ENCODE measurements at regions of chr17 and their contacts with region 1.

Region 1: GRCh38 chr17:6327007-6327406 is 107.9 kb downstream of the AIPL1 start:
- DNase-seq: no peak
- H3K4me3 ChIP-seq: no peak overlapping the region
- H3K27ac ChIP-seq: no peak overlapping the region
- H3K4me1 ChIP-seq: no peaks in the 10 kb centered on the region
- H3K27me3 ChIP-seq: no peaks in the 10 kb centered on the region
- CTCF ChIP-seq: no peak
- EP300 ChIP-seq: no peak
- POLR2A ChIP-seq: no peak

Region 2: GRCh38 chr17:6126768-6127167 is 200.2 kb before region 1 on chr17:
- in situ Hi-C with region 1: no loop called
- intact Hi-C with region 1: no loop called
- DNase-seq: no peak
- H3K4me3 ChIP-seq: no peak overlapping the region
- H3K27ac ChIP-seq: no peak overlapping the region
- H3K4me1 ChIP-seq: no peaks in the 10 kb centered on the region
- H3K27me3 ChIP-seq: no peaks in the 10 kb centered on the region
- CTCF ChIP-seq: no peak
- EP300 ChIP-seq: no peak
- POLR2A ChIP-seq: no peak

Region 3: DNA sequence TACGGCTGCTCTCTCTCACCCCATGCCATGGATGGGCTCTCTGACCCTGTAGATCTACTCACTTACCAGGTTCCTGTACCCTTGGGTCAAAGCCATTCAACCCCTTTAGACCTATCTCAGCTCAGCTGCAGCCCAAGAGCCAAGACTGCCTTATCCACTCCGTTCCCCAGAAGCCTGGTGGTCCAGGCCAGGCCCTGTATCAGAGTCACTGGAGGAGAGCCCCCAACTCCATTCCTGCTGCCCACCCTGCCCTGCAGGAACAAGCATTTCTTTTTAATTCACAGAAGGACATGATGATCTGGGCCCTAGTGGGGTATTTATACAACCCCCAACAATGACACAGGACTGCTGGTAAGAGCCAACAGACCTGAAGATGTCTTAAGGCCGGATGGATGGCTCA is 31.1 kb after region 1 on chr17:
- in situ Hi-C with region 1: no loop called
- intact Hi-C with region 1: loop called (anchors 1 kb)
- DNase-seq: no peak
- H3K4me3 ChIP-seq: no peak overlapping the region
- H3K27ac ChIP-seq: no peak overlapping the region
- H3K4me1 ChIP-seq: no peaks in the 10 kb centered on the region
- H3K27me3 ChIP-seq: peaks cover 6% of the 10 kb centered on the region
- CTCF ChIP-seq: no peak
- EP300 ChIP-seq: no peak
- POLR2A ChIP-seq: no peak

Region 4: GRCh38 chr17:6381057-6381456 is 54.0 kb after region 1 on chr17:
- in situ Hi-C with region 1: no loop called
- intact Hi-C with region 1: no loop called
- DNase-seq: no peak
- H3K4me3 ChIP-seq: no peak overlapping the region
- H3K27ac ChIP-seq: no peak overlapping the region
- H3K4me1 ChIP-seq: no peaks in the 10 kb centered on the region
- H3K27me3 ChIP-seq: peaks cover 10% of the 10 kb centered on the region
- CTCF ChIP-seq: no peak
- EP300 ChIP-seq: no peak
- POLR2A ChIP-seq: no peak

Region 5: DNA sequence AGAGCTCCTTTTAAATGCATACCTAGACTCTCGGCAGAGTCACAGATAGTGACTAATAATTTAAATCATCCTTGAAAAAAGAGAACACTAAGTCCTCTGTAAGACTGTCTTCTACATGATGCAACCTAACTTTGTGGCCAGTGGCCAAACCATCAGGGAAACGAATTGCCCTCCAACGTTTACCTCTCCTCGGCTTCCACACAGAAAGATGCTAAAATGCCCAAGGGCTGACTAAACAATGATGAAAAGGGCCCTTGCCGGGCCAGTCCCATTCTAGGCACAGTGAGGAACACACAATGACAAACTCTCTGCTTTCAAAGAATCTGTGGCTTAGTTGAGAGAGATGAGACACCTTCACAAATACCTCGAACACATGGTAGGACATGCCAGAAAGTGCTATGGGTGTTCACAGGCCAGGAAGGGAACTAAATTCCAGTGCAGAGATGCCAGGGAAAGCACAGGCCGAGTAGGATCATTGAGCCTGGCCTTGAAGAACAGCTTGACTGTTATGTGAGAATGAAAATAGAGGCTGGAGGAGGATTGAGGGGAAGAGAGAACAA is 264.7 kb after region 1 on chr17:
- in situ Hi-C with region 1: no loop called
- intact Hi-C with region 1: no loop called
- DNase-seq: no peak
- H3K4me3 ChIP-seq: no peak overlapping the region
- H3K27ac ChIP-seq: peak overlapping the region in 3 of 4 donors; percentile 8 to 25 (median 18)
- H3K4me1 ChIP-seq: peaks cover 0 to 14% (median 7%) of the 10 kb centered on the region in 4 donors
- H3K27me3 ChIP-seq: no peaks in the 10 kb centered on the region
- CTCF ChIP-seq: no peak
- EP300 ChIP-seq: no peak
- POLR2A ChIP-seq: no peak

Measured in transverse colon (tissue), 4 donors.